ENCODE measurements at regions of chr3 and their contacts with region 1.

Region 1: GRCh38 chr3:4290272-4290893 is 12.8 kb upstream of the SETMAR start:
- DNase-seq: no peak
- ATAC-seq: peak in 3 of 4 donors; percentile 54 to 71 (median 63)
- H3K4me3 ChIP-seq: no peak overlapping the region
- H3K27ac ChIP-seq: no peak overlapping the region
- H3K4me1 ChIP-seq: no peaks in the 10 kb centered on the region
- H3K27me3 ChIP-seq: no peaks in the 10 kb centered on the region
- CTCF ChIP-seq: peak; percentile 89

Region 2: GRCh38 chr3:3799173-3800079 is 491.0 kb before region 1 on chr3 and contains the start of gene LRRN1:
- intact Hi-C with region 1: loop called in 1 of 2 experiments (anchors 10 kb)
- DNase-seq: peak; percentile 69 to 83
- ATAC-seq: peak; percentile 78 to 83 (median 81)
- H3K4me3 ChIP-seq: peak within 1 kb of the TSS; percentile 82
- H3K27ac ChIP-seq: peak within 1 kb of the TSS; percentile 80
- H3K4me1 ChIP-seq: peaks cover 11% of the 10 kb centered on the region
- H3K27me3 ChIP-seq: no peaks in the 10 kb centered on the region
- CTCF ChIP-seq: no peak
- total RNA-seq, gene LRRN1: 5.1 to 12.6 (median 8.0) TPM

Measured in psoas muscle (tissue), 8 donors.